ENCODE measurements at regions of chr4 and their contacts with region 1.

Region 1: GRCh38 chr4:83484500-83485461 is at the start of gene ABRAXAS1:
- DNase-seq: peak; percentile 91
- H3K4me3 Mint-ChIP-seq: peak within 1 kb of the TSS; percentile 90
- H3K27ac Mint-ChIP-seq: peak within 1 kb of the TSS; percentile 95
- H3K4me1 Mint-ChIP-seq: peaks cover 10% of the 10 kb centered on the region
- H3K27me3 Mint-ChIP-seq: peaks cover under 1% of the 10 kb centered on the region
- total RNA-seq, gene ABRAXAS1: 11.0 and 11.3 TPM in 2 replicates

Region 2: GRCh38 chr4:83503974-83504373 is 19.2 kb after region 1 on chr4:
- intact Hi-C with region 1: no loop called
- DNase-seq: no peak
- H3K4me3 Mint-ChIP-seq: no peak overlapping the region
- H3K27ac Mint-ChIP-seq: no peak overlapping the region
- H3K4me1 Mint-ChIP-seq: peaks cover 6% of the 10 kb centered on the region
- H3K27me3 Mint-ChIP-seq: no peaks in the 10 kb centered on the region

Region 3: DNA sequence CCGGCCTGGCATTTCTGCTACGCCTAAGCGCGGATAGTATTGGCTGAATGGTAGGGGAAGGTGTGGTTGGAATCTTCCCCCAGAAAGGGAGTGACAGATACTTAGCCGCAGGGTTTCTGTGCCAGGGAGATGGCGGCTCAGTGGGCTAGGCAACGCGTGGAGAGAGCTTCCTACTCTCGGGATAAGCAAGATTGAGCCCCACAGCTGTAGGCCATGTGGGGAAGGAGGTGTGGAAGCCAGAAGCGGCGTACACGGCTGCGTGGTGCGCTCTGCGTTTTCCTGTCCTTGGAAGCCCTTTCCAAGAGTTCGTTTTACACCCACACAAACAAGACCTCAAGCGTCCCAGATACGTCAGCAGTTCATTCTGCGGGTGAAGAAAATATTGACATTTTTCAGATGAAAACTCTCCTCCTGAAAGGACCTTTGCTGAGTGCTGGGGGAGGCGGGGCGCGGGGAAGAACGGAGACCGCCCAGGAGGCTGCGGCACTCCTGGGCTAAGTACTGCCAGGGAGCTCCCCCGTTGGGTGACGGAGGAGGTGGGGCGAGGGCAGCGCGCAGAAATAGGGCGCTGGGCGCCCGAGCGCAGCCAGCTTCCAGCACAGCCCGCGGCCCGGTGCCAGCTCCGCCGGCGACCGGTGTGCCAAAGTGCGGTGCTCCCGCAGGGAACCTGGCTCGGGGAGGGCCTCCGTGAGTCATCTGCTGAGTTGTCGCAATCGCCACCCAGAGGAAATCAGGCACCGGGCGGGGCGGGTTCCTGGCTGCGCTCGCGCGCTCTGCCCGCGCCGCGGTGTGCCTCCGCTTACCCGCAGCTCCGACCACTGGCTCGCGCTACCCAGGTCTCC is 51.0 kb after region 1 on chr4 and contains the start of gene GPAT3:
- intact Hi-C with region 1: loop called (anchors 1 kb)
- DNase-seq: peak; percentile 55
- H3K4me3 Mint-ChIP-seq: peak within 1 kb of the TSS; percentile 83
- H3K27ac Mint-ChIP-seq: peak within 1 kb of the TSS; percentile 12
- H3K4me1 Mint-ChIP-seq: peaks cover 21% of the 10 kb centered on the region
- H3K27me3 Mint-ChIP-seq: peaks cover 47% of the 10 kb centered on the region
- total RNA-seq, gene GPAT3: 5.7 and 6.6 TPM in 2 replicates

Region 4: DNA sequence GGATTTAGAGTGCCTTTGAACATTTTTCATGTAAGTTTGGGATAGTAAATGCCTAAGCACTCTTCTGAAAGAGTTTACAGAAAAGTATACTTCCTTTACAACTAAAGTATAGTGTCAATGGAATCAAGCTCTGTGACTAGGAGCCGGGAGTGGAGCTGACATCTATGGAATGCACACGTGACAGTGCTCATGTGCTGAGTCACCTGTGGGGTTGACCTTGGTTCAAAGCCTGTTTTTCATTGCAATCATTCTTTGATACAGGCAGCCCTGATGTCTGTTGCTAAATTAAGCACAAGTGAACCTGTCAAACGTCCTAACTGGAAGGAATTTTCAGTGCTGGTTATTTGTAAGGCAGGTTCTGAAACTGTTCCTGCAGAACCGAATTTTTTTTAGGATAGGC is 133.7 kb after region 1 on chr4:
- intact Hi-C with region 1: no loop called
- DNase-seq: no peak
- H3K4me3 Mint-ChIP-seq: no peak overlapping the region
- H3K27ac Mint-ChIP-seq: no peak overlapping the region
- H3K4me1 Mint-ChIP-seq: no peaks in the 10 kb centered on the region
- H3K27me3 Mint-ChIP-seq: peaks cover 6% of the 10 kb centered on the region